Activated CD8-positive, alpha-beta memory T cell treated with anti-CD3 and anti-CD28 coated beads, Interleukin-2, amount 10 ng/mL, durations not matched to agents 7 days and 5 days (primary cell): ENCODE measurements at regions of chr7 and their contacts with region 1.

Region 1: DNA sequence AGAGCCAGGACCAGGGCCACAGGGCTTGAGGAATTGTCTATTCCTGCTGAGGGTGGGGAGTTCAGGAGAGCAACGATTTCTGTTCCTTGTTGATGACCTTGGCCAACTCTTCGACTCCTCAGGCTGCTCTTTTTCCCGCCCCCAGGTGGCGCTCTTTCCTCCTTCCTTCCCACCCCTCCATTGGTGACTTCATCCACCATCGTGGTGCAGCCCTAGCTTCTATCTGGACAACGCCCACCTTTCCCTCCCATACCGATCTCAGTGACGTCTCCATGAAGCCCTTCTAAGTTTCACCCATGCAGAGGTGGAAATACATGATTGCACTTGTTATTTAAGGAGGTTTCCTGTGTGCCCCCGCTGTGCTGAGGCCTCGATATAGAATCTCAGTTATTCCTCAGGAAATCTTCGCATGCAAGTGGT is 22.1 kb upstream of the CARD11 start:
- DNase-seq: peak; percentile 88
- ATAC-seq: peak; percentile 45
- H3K4me3 Mint-ChIP-seq: peak overlapping the region; percentile 51
- H3K27ac Mint-ChIP-seq: peak overlapping the region; percentile 94
- H3K4me1 Mint-ChIP-seq: peaks cover 88% of the 10 kb centered on the region
- H3K27me3 Mint-ChIP-seq: no peaks in the 10 kb centered on the region

Region 2: DNA sequence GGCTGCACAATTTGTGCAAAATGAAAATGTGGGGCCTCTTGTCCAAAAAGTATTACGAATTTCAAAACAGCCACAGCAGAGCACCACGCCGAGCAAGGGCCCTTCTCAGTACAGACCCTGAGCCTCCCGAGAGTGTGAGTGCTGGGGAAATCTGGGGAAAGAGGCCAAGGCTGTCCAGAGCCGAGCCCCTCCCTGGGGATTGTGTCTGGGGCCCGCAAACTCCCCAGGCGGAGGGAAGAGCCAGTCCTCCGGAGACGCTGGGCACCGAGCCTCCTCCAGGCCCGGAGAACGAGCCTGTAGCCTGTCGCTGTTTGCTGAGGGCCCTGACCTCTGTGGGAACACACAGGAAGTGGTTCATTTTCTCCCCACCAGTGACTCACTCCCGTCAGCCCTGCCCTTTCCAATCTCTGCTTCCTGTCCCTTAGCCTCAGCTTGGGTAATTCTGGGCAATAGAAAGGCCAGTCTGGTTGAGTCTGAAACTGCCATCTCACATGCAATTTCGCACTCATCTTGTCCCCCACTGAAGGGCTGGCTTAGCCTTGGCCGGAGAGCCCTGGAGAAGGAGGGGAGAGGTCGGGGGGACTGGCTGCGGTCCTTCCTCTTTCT is 202.2 kb before region 1 on chr7:
- CTCF ChIA-PET with region 1: interaction called, 14 read pairs
- DNase-seq: peak; percentile 94
- ATAC-seq: peak; percentile 94
- H3K4me3 Mint-ChIP-seq: peak overlapping the region; percentile 54
- H3K27ac Mint-ChIP-seq: peak overlapping the region; percentile 85
- H3K4me1 Mint-ChIP-seq: peaks cover 27% of the 10 kb centered on the region
- H3K27me3 Mint-ChIP-seq: peaks cover 13% of the 10 kb centered on the region

Region 3: GRCh38 chr7:2903682-2904162 is 162.0 kb before region 1 on chr7:
- CTCF ChIA-PET with region 1: interaction called, 15 read pairs
- DNase-seq: peak; percentile 49
- ATAC-seq: no peak
- H3K4me3 Mint-ChIP-seq: no peak overlapping the region
- H3K27ac Mint-ChIP-seq: peak overlapping the region; percentile 85
- H3K4me1 Mint-ChIP-seq: peaks cover 38% of the 10 kb centered on the region
- H3K27me3 Mint-ChIP-seq: peaks cover 3% of the 10 kb centered on the region

Region 4: GRCh38 chr7:3000566-3000965 is 65.2 kb before region 1 on chr7:
- CTCF ChIA-PET with region 1: no interaction called
- DNase-seq: no peak
- ATAC-seq: no peak
- H3K4me3 Mint-ChIP-seq: no peak overlapping the region
- H3K27ac Mint-ChIP-seq: no peak overlapping the region
- H3K4me1 Mint-ChIP-seq: peaks cover 5% of the 10 kb centered on the region
- H3K27me3 Mint-ChIP-seq: no peaks in the 10 kb centered on the region

Region 5: GRCh38 chr7:3087243-3087642 is 21.5 kb after region 1 on chr7:
- CTCF ChIA-PET with region 1: interaction called, 168 read pairs
- DNase-seq: no peak
- ATAC-seq: no peak
- H3K4me3 Mint-ChIP-seq: no peak overlapping the region
- H3K27ac Mint-ChIP-seq: no peak overlapping the region
- H3K4me1 Mint-ChIP-seq: peaks cover 27% of the 10 kb centered on the region
- H3K27me3 Mint-ChIP-seq: no peaks in the 10 kb centered on the region

Region 6: GRCh38 chr7:3103614-3104398 is 38.1 kb after region 1 on chr7:
- CTCF ChIA-PET with region 1: interaction called, 27 read pairs
- DNase-seq: peak; percentile 69
- ATAC-seq: peak; percentile 31
- H3K4me3 Mint-ChIP-seq: no peak overlapping the region
- H3K27ac Mint-ChIP-seq: peak overlapping the region; percentile 97
- H3K4me1 Mint-ChIP-seq: peaks cover 72% of the 10 kb centered on the region
- H3K27me3 Mint-ChIP-seq: no peaks in the 10 kb centered on the region

Region 7: DNA sequence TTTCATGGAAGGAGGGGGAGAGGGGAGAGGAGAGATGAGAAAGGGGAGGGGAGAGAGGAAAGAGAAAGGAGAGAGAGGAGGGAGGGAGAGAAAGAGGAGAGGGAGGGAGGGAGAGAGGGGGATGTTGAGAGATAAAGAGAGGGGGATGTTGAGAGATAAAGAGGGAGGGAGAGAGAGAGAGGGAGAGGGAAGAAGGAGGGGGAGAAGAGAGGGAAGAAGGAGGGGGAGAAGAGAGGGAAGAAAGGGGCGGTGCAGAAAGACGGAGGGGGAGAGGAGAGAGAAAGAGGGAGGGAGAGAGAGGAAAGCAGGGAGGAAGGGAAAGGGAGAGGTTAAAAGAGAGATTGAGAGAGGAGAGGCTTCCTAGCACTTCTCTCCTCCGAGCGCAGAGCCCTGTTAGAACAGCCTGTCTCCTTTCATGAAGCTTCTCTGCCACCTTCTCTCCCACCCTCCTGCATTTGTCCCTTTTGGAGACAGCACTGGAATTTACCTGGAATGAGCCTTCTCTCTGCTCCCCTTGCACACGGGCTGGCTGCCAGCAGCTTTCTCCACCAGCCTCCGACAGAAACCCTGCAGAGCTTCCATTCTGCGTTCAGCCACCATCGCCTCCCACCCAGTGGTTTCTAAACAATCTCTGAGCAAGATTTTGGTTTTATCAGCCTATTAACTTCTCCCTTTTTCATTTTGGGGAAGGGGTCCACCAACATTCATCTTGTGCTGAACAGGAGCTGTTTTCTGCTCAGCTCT is 51.9 kb after region 1 on chr7:
- CTCF ChIA-PET with region 1: interaction called, 26 read pairs
- DNase-seq: peak; percentile 67
- ATAC-seq: peak; percentile 41
- H3K4me3 Mint-ChIP-seq: peak overlapping the region; percentile 81
- H3K27ac Mint-ChIP-seq: peak overlapping the region; percentile 93
- H3K4me1 Mint-ChIP-seq: peaks cover 81% of the 10 kb centered on the region
- H3K27me3 Mint-ChIP-seq: no peaks in the 10 kb centered on the region

Region 8: GRCh38 chr7:3232228-3232627 is 166.5 kb after region 1 on chr7:
- CTCF ChIA-PET with region 1: no interaction called
- DNase-seq: peak; percentile 0
- ATAC-seq: no peak
- H3K4me3 Mint-ChIP-seq: no peak overlapping the region
- H3K27ac Mint-ChIP-seq: no peak overlapping the region
- H3K4me1 Mint-ChIP-seq: peaks cover 3% of the 10 kb centered on the region
- H3K27me3 Mint-ChIP-seq: peaks cover 14% of the 10 kb centered on the region